CD8-positive, alpha-beta T cell (primary cell): ENCODE measurements at regions of chr1 and their contacts with region 1.

Region 1: DNA sequence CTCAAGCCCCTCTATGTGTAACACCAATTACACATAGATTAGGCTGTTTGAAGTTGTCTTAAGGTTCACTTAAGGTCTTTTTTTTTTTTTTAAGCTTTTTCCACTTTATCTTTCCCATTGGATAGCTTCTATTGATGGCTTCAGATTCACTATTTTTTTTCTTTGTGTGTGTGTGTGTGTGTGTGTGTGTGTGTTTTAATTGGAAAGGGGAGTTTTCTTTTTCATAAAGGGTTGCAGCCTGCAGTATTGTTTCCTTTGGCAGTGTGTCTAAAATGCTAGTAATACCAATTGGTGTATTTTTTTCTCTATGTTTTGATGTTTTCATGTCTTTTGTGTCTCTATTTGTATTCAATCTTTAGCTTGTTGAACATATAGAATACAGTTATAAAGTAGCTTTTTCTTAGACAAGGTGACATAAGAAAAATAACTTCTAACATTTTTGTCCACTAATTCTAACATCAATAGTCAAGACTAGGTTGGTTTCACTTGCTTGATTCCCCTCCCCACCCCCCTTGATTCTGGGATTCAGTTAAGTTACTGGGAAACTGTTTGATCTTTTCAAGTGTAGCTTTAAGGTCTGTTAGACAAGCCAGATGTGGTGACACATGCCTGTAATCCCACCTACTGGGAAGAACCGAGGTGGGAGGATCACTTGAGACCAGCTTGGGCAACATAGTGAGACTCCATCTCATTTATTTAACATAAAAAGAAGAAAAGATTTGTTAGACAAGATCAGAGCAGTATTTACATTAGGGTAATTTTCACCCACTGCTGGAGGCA is 21.4 kb downstream of the PRRC2C start:
- DNase-seq: no peak
- ATAC-seq: no peak
- H3K4me3 ChIP-seq: peak overlapping the region in 1 of 2 experiments; percentile 2
- H3K4me3 Mint-ChIP-seq: peak overlapping the region; percentile 24
- H3K27ac ChIP-seq: peak overlapping the region in 1 of 2 experiments; percentile 47
- H3K27ac Mint-ChIP-seq: peak overlapping the region; percentile 53
- H3K4me1 ChIP-seq: peaks cover 77% of the 10 kb centered on the region
- H3K4me1 Mint-ChIP-seq: peaks cover 93% of the 10 kb centered on the region
- H3K27me3 ChIP-seq: no peaks in the 10 kb centered on the region
- H3K27me3 Mint-ChIP-seq: no peaks in the 10 kb centered on the region
- CTCF ChIP-seq: no peak

Region 2: DNA sequence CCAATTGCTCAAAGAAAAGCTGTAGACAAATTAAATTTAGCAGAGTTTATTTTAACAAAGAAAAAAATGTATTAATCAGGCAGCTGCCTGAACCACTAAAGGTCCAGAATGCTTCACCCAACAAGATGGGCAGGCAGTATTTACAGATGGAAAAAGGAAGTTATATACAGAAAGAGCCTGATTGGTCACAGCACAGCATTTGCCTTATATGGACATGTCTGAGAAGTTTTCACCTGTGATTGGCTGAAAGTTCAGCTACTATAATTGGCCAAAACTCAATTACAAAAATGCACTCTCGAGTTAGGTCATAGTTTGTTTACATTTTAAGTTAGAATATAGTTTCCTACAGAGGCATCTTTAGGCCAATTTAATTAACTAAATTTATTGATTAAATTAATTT is 273.5 kb before region 1 on chr1:
- CTCF ChIA-PET with region 1: no interaction called
- POLR2A ChIA-PET with region 1: no interaction called
- intact Hi-C with region 1: no loop called
- DNase-seq: no peak
- ATAC-seq: no peak
- H3K4me3 ChIP-seq: no peak overlapping the region
- H3K4me3 Mint-ChIP-seq: no peak overlapping the region
- H3K27ac ChIP-seq: no peak overlapping the region
- H3K27ac Mint-ChIP-seq: no peak overlapping the region
- H3K4me1 ChIP-seq: no peaks in the 10 kb centered on the region
- H3K4me1 Mint-ChIP-seq: no peaks in the 10 kb centered on the region
- H3K27me3 ChIP-seq: no peaks in the 10 kb centered on the region
- H3K27me3 Mint-ChIP-seq: peaks cover 20% of the 10 kb centered on the region
- CTCF ChIP-seq: no peak

Region 3: GRCh38 chr1:171494076-171494475 is 12.6 kb before region 1 on chr1:
- CTCF ChIA-PET with region 1: interaction called, 3 read pairs
- POLR2A ChIA-PET with region 1: interaction called, 4 read pairs
- intact Hi-C with region 1: loop called (anchors 1 to 2 kb)
- DNase-seq: no peak
- ATAC-seq: no peak
- H3K4me3 ChIP-seq: no peak overlapping the region
- H3K4me3 Mint-ChIP-seq: no peak overlapping the region
- H3K27ac ChIP-seq: no peak overlapping the region
- H3K27ac Mint-ChIP-seq: no peak overlapping the region
- H3K4me1 ChIP-seq: peaks cover 82% of the 10 kb centered on the region
- H3K4me1 Mint-ChIP-seq: peaks cover 91% of the 10 kb centered on the region
- H3K27me3 ChIP-seq: no peaks in the 10 kb centered on the region
- H3K27me3 Mint-ChIP-seq: no peaks in the 10 kb centered on the region
- CTCF ChIP-seq: no peak